ENCODE measurements at regions of chr5 and their contacts with region 1.

Region 1: DNA sequence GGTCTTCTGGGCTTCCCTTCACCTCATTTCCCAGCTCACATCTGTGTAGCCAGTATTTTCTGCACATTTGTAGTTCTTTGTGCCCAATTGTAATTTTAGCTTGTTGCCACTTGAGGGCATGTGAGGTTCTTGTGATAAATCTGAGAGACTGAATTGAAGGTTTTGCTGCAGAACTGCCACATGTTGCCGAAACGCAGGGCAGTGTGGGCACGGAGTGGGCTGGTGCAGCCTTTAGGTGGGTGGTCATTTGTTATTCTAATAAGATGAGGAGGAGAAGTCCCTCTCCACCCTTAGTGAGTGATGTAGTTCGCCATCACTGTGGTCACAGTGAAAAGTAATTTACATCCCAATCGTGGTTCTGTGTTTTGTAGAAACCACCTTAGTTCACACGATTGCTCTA is 21.2 kb downstream of the OTULIN start:
- DNase-seq: peak; percentile 57
- H3K4me3 Mint-ChIP-seq: no peak overlapping the region
- H3K27ac Mint-ChIP-seq: peak overlapping the region; percentile 71
- H3K4me1 Mint-ChIP-seq: peaks cover 13% of the 10 kb centered on the region
- H3K27me3 Mint-ChIP-seq: no peaks in the 10 kb centered on the region

Region 2: GRCh38 chr5:14415024-14415697 is 270.6 kb before region 1 on chr5:
- CTCF ChIA-PET with region 1: no interaction called
- DNase-seq: peak; percentile 26
- H3K4me3 Mint-ChIP-seq: peak overlapping the region; percentile 24
- H3K27ac Mint-ChIP-seq: peak overlapping the region; percentile 98
- H3K4me1 Mint-ChIP-seq: peaks cover 56% of the 10 kb centered on the region
- H3K27me3 Mint-ChIP-seq: peaks cover 6% of the 10 kb centered on the region

Region 3: GRCh38 chr5:14665949-14666348 is 19.8 kb before region 1 on chr5:
- CTCF ChIA-PET with region 1: interaction called, 24 read pairs
- DNase-seq: peak; percentile 64
- H3K4me3 Mint-ChIP-seq: peak overlapping the region; percentile 79
- H3K27ac Mint-ChIP-seq: peak overlapping the region; percentile 96
- H3K4me1 Mint-ChIP-seq: peaks cover 76% of the 10 kb centered on the region
- H3K27me3 Mint-ChIP-seq: no peaks in the 10 kb centered on the region

Region 4: DNA sequence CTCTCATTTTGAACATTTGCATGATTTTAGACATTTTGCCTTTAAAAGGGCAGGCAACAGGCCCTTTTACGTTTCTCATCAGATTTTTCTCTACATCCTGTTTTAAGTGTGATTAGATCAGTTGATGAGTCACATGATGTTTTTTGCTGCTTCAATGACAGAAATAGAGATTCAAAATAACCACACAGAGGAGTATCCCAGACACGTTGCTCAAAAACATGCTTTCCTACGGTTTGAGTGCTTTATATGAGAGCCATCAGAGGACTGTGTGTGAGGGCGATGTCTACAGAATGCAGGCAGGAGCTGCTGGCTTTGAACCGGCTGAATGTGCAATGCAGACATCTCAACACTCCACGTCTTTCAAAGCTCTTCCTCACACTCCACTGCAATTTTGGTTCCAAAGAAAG is 20.9 kb after region 1 on chr5:
- CTCF ChIA-PET with region 1: interaction called, 23 read pairs
- DNase-seq: peak; percentile 59
- H3K4me3 Mint-ChIP-seq: peak overlapping the region; percentile 75
- H3K27ac Mint-ChIP-seq: peak overlapping the region; percentile 100
- H3K4me1 Mint-ChIP-seq: peaks cover 81% of the 10 kb centered on the region
- H3K27me3 Mint-ChIP-seq: no peaks in the 10 kb centered on the region

Region 5: DNA sequence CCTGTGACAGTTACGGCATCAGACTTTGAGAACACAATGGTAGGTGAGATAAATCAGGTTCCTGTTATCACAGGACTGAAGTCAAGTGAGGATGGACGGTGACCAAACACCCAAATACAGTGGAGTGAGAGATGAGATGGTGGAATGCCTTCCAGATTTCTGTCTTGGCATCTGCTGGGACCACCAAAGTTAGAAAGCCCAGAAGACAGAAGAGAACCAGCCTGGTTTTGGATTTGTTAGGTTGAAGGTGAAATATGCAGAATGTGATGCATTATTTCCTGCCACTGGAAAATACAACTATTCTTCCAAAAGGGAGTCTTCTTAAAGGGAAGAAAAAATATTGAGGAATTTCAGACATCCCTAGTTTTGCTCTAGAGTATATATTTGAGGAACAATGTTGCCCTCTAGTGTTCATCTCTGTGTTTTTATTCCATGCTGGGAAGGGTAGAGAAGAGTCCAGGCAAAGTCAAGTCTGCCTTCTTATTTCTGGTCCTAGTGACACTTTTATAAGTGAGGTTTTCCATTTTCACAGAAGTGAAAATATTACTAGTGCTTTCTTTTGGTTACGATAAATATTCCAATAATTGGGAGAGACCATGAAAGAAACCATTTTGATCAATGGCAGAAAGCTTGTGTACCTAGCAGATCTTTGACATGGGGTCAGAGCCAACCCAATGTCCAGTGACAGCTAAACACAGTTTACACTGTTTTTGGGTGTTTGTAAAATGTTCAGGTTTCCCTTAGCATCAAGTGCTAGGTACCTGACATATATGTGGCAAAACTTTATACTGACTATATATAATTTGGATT is 328.1 kb after region 1 on chr5:
- CTCF ChIA-PET with region 1: interaction called, 11 read pairs
- DNase-seq: no peak
- H3K4me3 Mint-ChIP-seq: no peak overlapping the region
- H3K27ac Mint-ChIP-seq: no peak overlapping the region
- H3K4me1 Mint-ChIP-seq: no peaks in the 10 kb centered on the region
- H3K27me3 Mint-ChIP-seq: peaks cover 6% of the 10 kb centered on the region